H1 (cell line): ENCODE measurements at regions of chr1 and their contacts with region 1.

Region 1: DNA sequence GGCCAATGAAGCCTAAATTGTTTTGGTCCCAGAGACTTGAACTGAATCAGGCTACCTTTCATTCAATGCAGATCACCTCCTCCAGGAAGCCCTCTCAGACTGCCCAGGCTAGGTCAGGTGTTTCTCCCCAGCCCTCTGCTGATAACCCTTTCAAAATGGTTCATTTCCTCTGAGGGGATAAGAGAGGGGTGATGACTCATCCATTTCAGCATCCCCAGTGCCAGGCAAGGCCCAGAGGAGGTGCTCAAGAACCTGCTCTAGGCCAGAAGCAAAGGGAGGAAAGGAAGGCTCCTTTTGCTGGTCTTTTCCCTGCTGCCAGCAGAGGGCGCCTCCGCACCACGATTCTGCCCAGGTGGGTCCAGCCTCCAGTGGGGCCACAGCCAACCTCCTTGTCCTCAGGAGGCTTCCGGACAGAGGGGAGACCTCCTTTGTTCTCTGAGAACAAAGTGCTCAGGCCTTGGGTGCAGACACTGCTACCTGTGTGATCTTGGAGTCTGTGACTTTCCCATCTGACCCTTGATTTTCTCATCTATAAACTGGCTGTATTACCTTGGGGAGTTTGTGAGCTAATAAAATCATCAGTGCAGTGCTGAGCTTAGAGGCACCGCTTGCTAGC is 45.3 kb upstream of the ARHGEF10L start:
- DNase-seq: peak; percentile 89 to 96
- H3K4me3 ChIP-seq: no peak overlapping the region
- H3K27ac ChIP-seq: no peak overlapping the region
- H3K4me1 ChIP-seq: no peaks in the 10 kb centered on the region
- H3K27me3 ChIP-seq: no peaks in the 10 kb centered on the region
- CTCF ChIP-seq: peak; percentile 98 to 100 (median 99)
- EP300 ChIP-seq: 0 out of 3 replicates have a peak, but pooled peaks of 1 of the 2 experiments have one; percentile 40
- POLR2A ChIP-seq: no peak
- RAD21 ChIP-seq: peak; percentile 100

Region 2: DNA sequence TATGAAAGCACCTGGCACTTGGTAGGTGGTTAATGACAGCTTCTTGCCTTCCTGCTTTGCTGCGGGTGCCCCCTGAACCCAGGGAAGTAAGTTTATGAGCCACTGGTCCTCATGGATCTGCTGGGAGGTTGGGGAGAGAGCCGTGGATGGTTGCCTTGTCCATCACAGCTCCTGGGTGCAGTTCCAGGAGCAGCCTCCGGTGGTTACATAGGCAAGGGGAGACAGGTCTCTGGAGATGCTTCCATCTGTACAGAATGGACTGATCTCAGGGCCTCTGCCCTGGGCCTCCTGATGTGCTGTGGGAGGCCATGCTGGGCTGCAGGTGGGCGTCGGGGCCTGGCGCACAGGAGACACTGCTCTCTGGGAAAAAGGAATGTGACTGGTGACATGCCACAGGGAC is 13.7 kb after region 1 on chr1:
- CTCF ChIA-PET with region 1: interaction called, 59 read pairs
- POLR2A ChIA-PET with region 1: no interaction called
- DNase-seq: no peak
- H3K4me3 ChIP-seq: no peak overlapping the region
- H3K27ac ChIP-seq: no peak overlapping the region
- H3K4me1 ChIP-seq: no peaks in the 10 kb centered on the region; a peak in 2 of 7 replicates
- H3K27me3 ChIP-seq: no peaks in the 10 kb centered on the region
- CTCF ChIP-seq: peak; percentile 34 to 69 (median 68)
- EP300 ChIP-seq: no peak
- POLR2A ChIP-seq: no peak
- RAD21 ChIP-seq: peak; percentile 31 to 51; a peak in 3 of 4 replicates